Activated CD8-positive, alpha-beta T cell treated with anti-CD3 and anti-CD28 coated beads, Interleukin-2, amount 10 ng/mL, durations not matched to agents 7 days and 5 days (primary cell): ENCODE measurements at regions of chr1 and their contacts with region 1.

Region 1: GRCh38 chr1:182781841-182782586 is 7.6 kb upstream of the NPL start:
- DNase-seq: peak; percentile 78
- ATAC-seq: peak; percentile 86
- H3K4me3 Mint-ChIP-seq: no peak overlapping the region
- H3K27ac Mint-ChIP-seq: no peak overlapping the region
- H3K4me1 Mint-ChIP-seq: peaks cover 10% of the 10 kb centered on the region
- H3K27me3 Mint-ChIP-seq: peaks cover 17% of the 10 kb centered on the region

Region 2: GRCh38 chr1:182588500-182589452 is 193.2 kb before region 1 on chr1 and contains the start of gene RNASEL:
- CTCF ChIA-PET with region 1: interaction called, 899 read pairs
- POLR2A ChIA-PET with region 1: interaction called, 4 read pairs
- DNase-seq: peak; percentile 65
- ATAC-seq: peak; percentile 94
- H3K4me3 Mint-ChIP-seq: peak within 1 kb of the TSS; percentile 83
- H3K27ac Mint-ChIP-seq: peak within 1 kb of the TSS; percentile 98
- H3K4me1 Mint-ChIP-seq: peaks cover 17% of the 10 kb centered on the region
- H3K27me3 Mint-ChIP-seq: peaks cover 5% of the 10 kb centered on the region
- total RNA-seq, gene RNASEL: 5.7 to 6.0 TPM

Region 3: DNA sequence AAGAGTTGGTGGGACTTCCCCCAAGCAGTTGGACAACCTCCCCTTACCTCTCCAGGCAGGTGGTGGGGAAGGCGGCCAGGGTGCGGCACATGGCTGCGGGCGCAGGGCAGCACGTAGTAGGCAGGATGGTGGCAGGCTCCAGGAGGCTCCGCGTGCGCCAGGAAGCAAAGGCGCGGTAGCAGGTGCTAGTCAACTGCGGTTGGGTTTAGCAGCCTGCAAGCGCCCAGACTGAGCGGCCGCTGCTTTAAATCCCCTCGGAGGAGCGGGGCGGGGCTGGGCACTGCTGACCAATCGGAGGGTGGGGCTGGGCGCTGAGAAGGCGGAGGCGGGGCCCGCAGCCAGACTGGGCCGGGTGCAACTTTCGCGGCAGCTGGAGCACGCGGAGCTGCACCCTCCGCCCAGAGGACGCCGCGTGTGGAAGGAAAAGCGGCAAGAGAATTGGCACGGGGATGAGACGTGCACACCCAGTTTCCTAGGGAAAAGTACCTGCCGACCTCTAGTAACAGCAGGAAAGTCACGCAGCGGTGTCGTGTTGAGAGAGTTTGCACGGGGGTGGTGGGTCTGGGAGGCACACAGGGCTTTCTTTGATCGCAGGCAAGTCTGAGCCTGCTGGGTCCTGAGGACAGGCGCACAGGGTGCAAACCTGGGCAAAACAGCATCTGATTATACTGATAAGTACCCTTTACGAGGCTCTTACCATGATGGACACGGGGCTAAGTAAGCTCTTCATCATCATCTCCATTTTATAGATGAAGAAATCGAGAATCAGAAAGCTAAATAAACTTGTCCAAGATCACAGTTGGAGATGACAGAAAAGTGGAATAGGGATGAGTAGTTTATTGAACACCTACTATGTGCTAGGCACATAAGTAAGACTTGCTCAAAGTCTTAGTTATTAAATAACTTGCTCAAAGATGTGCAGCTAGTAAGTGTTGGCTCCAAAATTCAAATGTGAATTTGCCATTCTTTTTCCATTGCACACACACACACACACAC is 177.5 kb before region 1 on chr1 and contains the start of gene RGS16:
- CTCF ChIA-PET with region 1: interaction called, 899 read pairs
- POLR2A ChIA-PET with region 1: interaction called, 10 read pairs
- DNase-seq: peak; percentile 93
- ATAC-seq: peak; percentile 89
- H3K4me3 Mint-ChIP-seq: no peak within 1 kb of the TSS
- H3K27ac Mint-ChIP-seq: peak within 1 kb of the TSS; percentile 47
- H3K4me1 Mint-ChIP-seq: peaks cover 11% of the 10 kb centered on the region
- H3K27me3 Mint-ChIP-seq: peaks cover 28% of the 10 kb centered on the region
- total RNA-seq, gene RGS16: 0.63 to 0.66 TPM

Region 4: DNA sequence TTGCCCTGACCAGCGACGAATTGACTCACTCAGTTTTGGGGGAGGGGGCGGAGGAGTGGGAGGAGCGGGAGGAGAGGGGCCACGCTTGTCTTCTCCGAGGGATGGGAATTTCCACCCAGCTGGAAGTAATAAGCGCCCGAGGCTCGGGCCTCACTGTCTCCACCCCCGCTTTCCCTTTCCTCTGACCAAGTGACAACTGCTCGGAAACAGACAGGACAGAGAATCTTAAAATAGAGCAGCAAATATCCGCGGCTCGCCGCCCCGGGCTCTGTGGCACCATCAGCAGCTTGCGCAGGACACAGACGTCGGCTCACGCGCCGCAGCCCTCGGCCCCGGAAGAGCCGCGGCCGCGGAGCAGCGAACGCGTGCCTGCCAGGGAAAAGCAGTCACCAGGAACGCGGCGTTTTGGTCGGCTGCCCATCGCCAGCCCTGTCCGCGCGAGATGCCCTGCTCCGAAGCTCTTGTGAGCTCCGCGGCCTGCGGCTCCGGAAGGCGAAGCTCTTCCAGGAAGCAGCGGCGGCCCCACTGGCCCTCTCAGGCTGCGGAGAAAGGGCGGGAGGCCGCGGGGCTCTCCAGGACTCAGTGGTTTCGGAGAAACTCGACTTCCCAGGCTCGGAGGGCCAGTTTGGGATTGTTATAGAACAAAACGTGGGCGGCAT is 167.1 kb before region 1 on chr1:
- CTCF ChIA-PET with region 1: interaction called, 64 read pairs
- POLR2A ChIA-PET with region 1: interaction called, 3 read pairs
- DNase-seq: peak; percentile 52
- ATAC-seq: peak; percentile 38
- H3K4me3 Mint-ChIP-seq: peak overlapping the region; percentile 61
- H3K27ac Mint-ChIP-seq: peak overlapping the region; percentile 85
- H3K4me1 Mint-ChIP-seq: peaks cover 56% of the 10 kb centered on the region
- H3K27me3 Mint-ChIP-seq: peaks cover 75% of the 10 kb centered on the region

Region 5: DNA sequence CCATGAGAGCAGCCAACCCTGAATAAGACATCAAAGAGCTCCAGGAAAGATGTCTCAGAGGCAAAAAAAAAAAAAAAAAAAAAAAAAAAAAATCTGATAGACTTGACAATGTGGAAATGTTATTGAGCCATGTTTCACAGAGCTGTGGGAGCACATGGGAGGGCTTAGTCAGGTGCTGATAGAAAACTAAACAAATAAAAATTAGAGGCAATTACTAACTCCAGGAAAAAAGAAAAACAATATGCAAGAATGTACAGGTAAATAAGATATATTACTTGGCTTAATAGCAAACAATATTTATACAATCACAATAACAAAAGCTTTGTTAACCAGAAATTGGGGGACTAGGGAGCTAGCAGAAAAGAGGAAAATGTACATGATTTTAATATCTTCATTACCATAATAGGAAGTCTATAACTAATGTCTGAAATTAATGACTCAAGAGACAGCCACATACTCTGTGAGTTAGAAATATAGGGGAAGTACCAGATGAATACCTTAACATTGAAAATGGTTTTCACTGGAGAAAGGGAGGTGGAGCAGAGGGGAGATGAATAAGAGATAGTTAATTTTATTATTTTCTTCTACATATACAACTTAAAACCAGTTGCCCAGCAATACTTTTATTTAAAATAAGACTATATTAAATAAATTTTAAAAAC is 161.0 kb before region 1 on chr1:
- CTCF ChIA-PET with region 1: interaction called, 64 read pairs
- POLR2A ChIA-PET with region 1: interaction called, 3 read pairs
- DNase-seq: no peak
- ATAC-seq: no peak
- H3K4me3 Mint-ChIP-seq: no peak overlapping the region
- H3K27ac Mint-ChIP-seq: no peak overlapping the region
- H3K4me1 Mint-ChIP-seq: peaks cover 50% of the 10 kb centered on the region
- H3K27me3 Mint-ChIP-seq: peaks cover 64% of the 10 kb centered on the region

Region 6: GRCh38 chr1:182716740-182717720 is 65.0 kb before region 1 on chr1:
- CTCF ChIA-PET with region 1: interaction called, 11 read pairs
- POLR2A ChIA-PET with region 1: no interaction called
- DNase-seq: no peak
- ATAC-seq: no peak
- H3K4me3 Mint-ChIP-seq: no peak overlapping the region
- H3K27ac Mint-ChIP-seq: no peak overlapping the region
- H3K4me1 Mint-ChIP-seq: peaks cover 23% of the 10 kb centered on the region
- H3K27me3 Mint-ChIP-seq: no peaks in the 10 kb centered on the region

Region 7: DNA sequence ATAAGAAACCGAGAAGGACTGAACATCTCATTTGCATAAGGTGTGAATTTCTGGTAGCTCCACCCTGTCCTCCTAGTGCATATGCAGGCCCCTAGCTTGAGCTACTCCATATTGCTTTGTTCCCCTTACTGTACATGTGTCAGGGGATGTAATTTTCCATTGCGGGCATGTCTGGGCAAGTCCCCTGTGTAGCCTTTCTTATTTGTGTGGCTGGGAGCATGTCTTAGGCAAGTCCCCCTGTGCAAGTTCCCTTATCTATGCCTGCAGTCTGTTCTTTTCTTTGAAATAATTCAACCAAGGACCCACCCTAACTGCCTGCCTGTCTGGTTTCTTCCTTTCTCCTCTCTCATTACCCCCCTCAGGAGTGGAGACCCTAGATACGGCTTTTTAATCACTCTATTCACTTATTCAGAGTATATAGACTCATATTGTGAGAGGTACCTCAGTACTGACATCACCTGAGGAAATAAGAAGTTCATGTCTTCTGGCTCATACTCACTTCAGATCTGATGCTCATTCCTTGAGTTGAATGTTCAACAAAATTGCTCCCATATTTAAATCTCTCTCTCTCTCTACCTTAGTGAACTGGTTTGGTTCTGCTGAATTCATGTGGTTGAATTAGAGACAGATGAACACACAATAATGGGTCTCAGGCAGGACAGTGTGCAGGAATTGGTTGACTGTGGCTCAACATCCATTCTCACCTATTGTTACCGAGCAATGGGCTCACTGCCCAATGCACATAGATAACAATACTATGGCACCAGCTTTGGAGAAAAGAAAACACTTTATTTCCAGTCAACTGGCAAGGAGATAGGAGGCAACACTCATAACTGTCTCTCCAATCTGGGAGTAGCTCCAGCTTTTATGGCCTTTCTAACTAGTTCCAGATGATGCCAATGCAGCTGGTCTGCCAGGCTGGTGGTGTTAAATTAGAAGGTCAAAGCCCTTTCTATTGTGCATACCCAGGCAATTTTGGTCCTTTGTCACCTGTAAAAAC is 20.3 kb before region 1 on chr1:
- CTCF ChIA-PET with region 1: interaction called, 12 read pairs
- POLR2A ChIA-PET with region 1: no interaction called
- DNase-seq: no peak
- ATAC-seq: no peak
- H3K4me3 Mint-ChIP-seq: no peak overlapping the region
- H3K27ac Mint-ChIP-seq: no peak overlapping the region
- H3K4me1 Mint-ChIP-seq: no peaks in the 10 kb centered on the region
- H3K27me3 Mint-ChIP-seq: peaks cover 17% of the 10 kb centered on the region